ENCODE measurements at regions of chr10 and their contacts with region 1.

Region 1: GRCh38 chr10:73940634-73941221 is 29.8 kb downstream of the PLAU start:
- DNase-seq: peak; percentile 73
- ATAC-seq: peak; percentile 96 to 98
- H3K4me3 ChIP-seq: no peak overlapping the region
- H3K27ac ChIP-seq: peak overlapping the region; percentile 82 to 86
- H3K4me1 ChIP-seq: peaks cover 24% of the 10 kb centered on the region
- CTCF ChIP-seq: peak; percentile 96
- EP300 ChIP-seq: no peak
- POLR2A ChIP-seq: no peak
- RAD21 ChIP-seq: peak; percentile 97 to 100

Region 2: DNA sequence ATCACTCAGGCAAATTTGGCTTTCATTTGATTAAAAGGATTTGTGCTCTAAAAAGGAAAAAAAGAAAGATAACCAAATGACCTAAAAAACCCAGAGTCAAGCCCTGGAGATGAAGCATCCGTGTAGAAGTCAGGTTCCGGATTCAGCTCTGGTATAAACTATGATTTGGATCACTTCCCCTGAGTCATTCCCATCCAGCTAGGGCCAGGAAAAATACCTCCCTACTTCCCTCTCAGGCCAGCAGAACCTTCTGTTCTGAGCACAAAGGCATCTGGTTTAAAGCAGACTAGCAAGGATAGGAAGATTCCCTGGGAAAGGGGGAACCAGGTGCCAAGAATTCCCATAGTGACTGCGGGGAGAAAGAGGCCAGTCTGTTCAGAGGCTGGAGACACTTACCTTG is 103.7 kb before region 1 on chr10:
- CTCF ChIA-PET with region 1: interaction called, 23 read pairs
- POLR2A ChIA-PET with region 1: no interaction called
- DNase-seq: no peak
- ATAC-seq: no peak
- H3K4me3 ChIP-seq: no peak overlapping the region
- H3K27ac ChIP-seq: no peak overlapping the region
- H3K4me1 ChIP-seq: peaks cover 9% of the 10 kb centered on the region; the same call in 2 of the 3 replicates
- CTCF ChIP-seq: no peak
- EP300 ChIP-seq: no peak
- POLR2A ChIP-seq: no peak
- RAD21 ChIP-seq: no peak

Region 3: GRCh38 chr10:73865459-73866442 is 75.0 kb before region 1 on chr10:
- CTCF ChIA-PET with region 1: interaction called, 32 read pairs
- POLR2A ChIA-PET with region 1: no interaction called
- DNase-seq: no peak
- ATAC-seq: no peak
- H3K4me3 ChIP-seq: no peak overlapping the region
- H3K27ac ChIP-seq: no peak overlapping the region
- H3K4me1 ChIP-seq: no peaks in the 10 kb centered on the region
- CTCF ChIP-seq: no peak
- EP300 ChIP-seq: no peak
- POLR2A ChIP-seq: no peak
- RAD21 ChIP-seq: no peak

Region 4: DNA sequence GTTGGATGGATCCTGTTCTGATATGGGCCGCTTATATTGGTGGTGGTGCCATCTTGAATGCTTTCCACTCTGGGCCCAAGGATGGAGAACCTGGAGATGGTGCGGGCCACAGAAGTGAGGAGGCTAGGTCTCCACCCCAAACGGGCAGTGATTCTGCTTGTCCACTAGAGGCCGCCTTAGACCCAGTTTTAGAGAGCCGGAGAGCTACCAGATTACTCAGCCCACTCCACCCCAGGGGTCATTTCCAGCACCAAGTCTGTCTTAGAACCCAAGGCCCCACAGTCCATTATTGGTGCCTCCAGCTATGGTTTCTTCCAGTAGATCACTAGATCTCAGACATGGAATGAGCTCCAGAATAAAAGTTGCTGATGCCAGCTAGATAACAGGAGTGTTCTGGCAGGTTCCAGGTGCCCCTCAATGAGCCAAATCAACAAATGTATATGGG is 54.6 kb before region 1 on chr10:
- CTCF ChIA-PET with region 1: interaction called, 936 read pairs
- POLR2A ChIA-PET with region 1: interaction called, 21 read pairs
- DNase-seq: peak; percentile 84
- ATAC-seq: peak; percentile 77 to 86
- H3K4me3 ChIP-seq: no peak overlapping the region
- H3K27ac ChIP-seq: peak overlapping the region; percentile 97 to 98
- H3K4me1 ChIP-seq: peaks cover 51% of the 10 kb centered on the region
- CTCF ChIP-seq: peak; percentile 93
- EP300 ChIP-seq: no peak
- POLR2A ChIP-seq: no peak
- RAD21 ChIP-seq: peak; percentile 99

Region 5: GRCh38 chr10:73956476-73957359 is 16.0 kb after region 1 on chr10:
- CTCF ChIA-PET with region 1: interaction called, 52 read pairs
- POLR2A ChIA-PET with region 1: no interaction called
- DNase-seq: no peak
- ATAC-seq: peak; percentile 26 to 57; a peak in 3 of 6 replicates
- H3K4me3 ChIP-seq: no peak overlapping the region
- H3K27ac ChIP-seq: peak overlapping the region; percentile 29 to 30; a peak in 4 of 6 replicates
- H3K4me1 ChIP-seq: peaks cover 13% of the 10 kb centered on the region; the same call in 2 of the 3 replicates
- CTCF ChIP-seq: no peak
- EP300 ChIP-seq: no peak
- POLR2A ChIP-seq: no peak
- RAD21 ChIP-seq: no peak

Region 6: DNA sequence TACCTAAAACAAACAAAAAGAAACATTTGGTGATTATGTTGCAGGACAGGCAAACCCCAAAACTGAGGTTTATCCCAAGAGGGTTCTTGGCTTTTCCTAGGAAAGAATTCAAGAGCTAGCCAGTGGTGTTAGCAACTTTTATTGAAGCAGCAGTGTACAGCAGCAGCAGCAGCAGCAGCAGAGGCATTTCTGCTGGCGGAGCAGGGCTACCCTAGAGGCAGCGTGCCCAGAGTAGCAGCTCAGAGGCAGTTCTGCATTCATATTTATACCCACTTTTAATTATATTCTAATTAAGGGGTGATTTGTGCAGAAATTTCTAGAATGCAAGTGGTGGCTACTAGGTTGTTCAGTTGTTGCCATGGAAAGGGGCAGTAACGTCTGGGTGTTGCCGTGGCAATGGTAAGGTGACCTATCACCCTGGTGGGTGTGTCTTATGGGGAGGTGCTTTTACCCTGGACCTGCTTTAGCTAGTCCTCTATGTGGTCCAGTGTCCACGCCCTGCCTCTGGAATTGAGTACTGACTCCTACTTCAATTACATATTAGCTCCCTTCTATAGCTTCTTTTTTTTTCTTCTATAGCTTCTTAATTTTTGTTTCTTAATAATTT is 111.1 kb after region 1 on chr10:
- CTCF ChIA-PET with region 1: interaction called, 14 read pairs
- POLR2A ChIA-PET with region 1: no interaction called
- DNase-seq: peak; percentile 25 to 61
- ATAC-seq: peak; percentile 63 to 68; a peak in 5 of 6 replicates
- H3K4me3 ChIP-seq: no peak overlapping the region
- H3K27ac ChIP-seq: peak overlapping the region; percentile 10 to 37; a peak in 3 of 6 replicates
- H3K4me1 ChIP-seq: peaks cover 88% of the 10 kb centered on the region
- CTCF ChIP-seq: no peak
- EP300 ChIP-seq: no peak
- POLR2A ChIP-seq: no peak
- RAD21 ChIP-seq: no peak

Region 7: GRCh38 chr10:74151056-74151878 is 210.5 kb after region 1 on chr10 and contains the start of gene ADK:
- CTCF ChIA-PET with region 1: no interaction called
- POLR2A ChIA-PET with region 1: interaction called, 10 read pairs
- DNase-seq: peak; percentile 97 to 99
- ATAC-seq: peak; percentile 93 to 94
- H3K4me3 ChIP-seq: peak within 1 kb of the TSS; percentile 86
- H3K27ac ChIP-seq: peak within 1 kb of the TSS; percentile 83 to 88
- H3K4me1 ChIP-seq: peaks cover 25% of the 10 kb centered on the region
- CTCF ChIP-seq: no peak
- EP300 ChIP-seq: no peak
- POLR2A ChIP-seq: peak; percentile 73
- RAD21 ChIP-seq: no peak; a peak in 1 of 5 replicates
- polyA plus RNA-seq, gene ADK: 38.4 and 40.7 TPM in 2 replicates

Measured in A549 (cell line).